Ascending aorta (tissue), 2 donors: ENCODE measurements at regions of chr14 and their contacts with region 1.

Region 1: DNA sequence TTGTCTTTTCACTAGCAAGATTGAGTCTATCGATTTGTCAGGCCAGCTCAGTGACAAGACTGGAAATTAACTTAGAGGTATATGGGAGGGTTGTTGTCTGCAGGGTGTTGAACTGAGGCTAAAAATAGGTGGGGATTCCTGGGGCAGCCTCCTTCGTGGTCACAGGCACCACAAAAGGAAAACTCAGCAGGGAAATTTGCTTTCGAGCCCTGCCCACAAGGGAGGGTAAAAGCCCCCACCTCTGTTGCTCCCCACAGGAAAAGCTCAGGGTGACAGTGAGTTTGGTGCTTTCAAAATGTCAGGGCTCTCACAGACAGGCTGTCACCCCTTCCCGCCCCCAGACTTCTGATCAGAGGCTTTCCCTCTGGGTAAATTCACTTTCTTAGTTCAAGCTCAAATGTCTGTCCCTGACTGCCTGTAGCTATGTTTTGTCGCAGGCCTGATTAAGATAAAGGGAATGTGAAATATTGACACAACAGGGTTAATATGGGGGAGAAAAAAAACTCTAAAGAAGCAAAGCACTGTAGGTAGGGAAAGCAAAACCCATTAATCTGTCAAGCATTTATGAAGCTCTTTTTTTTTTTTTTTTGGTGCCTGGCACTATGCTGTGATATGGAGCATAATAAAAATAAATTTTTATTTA is 11.7 kb upstream of the NFKBIA start:
- DNase-seq: no peak
- H3K4me3 ChIP-seq: no peak overlapping the region
- H3K27ac ChIP-seq: peak overlapping the region; percentile 65 to 75
- H3K4me1 ChIP-seq: peaks cover 0 to 29% of the 10 kb centered on the region in 2 donors
- H3K27me3 ChIP-seq: no peaks in the 10 kb centered on the region
- CTCF ChIP-seq: no peak

Region 2: DNA sequence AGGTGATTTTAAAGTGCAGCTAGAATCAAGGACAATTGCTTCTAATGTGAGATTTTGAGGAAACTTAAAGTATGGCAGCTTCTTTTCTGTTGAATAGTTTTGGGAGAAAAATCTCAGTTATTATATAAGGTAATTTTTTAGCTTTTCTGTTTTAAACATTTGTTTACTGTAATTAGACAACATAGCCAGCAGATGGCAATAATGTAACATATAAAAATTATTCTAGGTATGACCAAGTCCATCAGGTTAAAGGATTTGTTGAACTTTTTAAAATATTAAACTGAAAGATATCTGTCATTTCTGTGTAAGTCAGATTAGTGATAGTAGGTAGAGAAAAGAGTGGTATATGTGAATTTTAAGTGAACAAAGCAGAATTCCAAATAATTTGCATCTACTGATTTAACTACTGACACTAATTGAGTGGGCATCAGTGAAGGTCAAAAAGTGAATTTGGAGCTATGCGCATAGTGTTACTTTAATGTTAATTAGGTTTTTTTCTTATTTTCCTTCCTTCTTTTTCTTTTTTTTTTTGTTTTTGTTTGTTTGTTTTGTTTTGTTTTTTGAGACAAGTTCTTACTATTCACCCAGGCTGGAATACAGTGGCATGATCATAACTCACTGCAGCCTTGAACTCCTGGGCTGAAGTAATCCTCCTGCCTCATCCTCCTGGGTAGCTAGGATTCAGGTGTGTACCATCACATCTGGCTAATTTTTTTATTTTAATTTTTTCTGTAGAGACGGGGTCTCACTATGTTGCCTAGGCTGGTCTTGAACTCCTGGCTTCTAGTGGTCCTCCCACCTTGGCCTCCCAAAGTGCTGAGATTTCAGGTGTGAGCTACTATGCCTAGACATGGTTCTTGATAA is 275.3 kb before region 1 on chr14:
- intact Hi-C with region 1: loop called (anchors 1 kb)
- DNase-seq: no peak
- H3K4me3 ChIP-seq: no peak overlapping the region
- H3K27ac ChIP-seq: no peak overlapping the region
- H3K4me1 ChIP-seq: no peaks in the 10 kb centered on the region
- H3K27me3 ChIP-seq: no peaks in the 10 kb centered on the region
- CTCF ChIP-seq: peak in 1 of 3 experiments; percentile 48

Region 3: GRCh38 chr14:35215110-35215876 is 200.9 kb before region 1 on chr14:
- intact Hi-C with region 1: loop called (anchors 1 kb)
- DNase-seq: no peak
- H3K4me3 ChIP-seq: no peak overlapping the region
- H3K27ac ChIP-seq: no peak overlapping the region
- H3K4me1 ChIP-seq: no peaks in the 10 kb centered on the region
- H3K27me3 ChIP-seq: no peaks in the 10 kb centered on the region
- CTCF ChIP-seq: peak; percentile 36 to 67 (median 48)